CD4-positive, alpha-beta T cell (primary cell): ENCODE measurements at regions of chr12 and their contacts with region 1.

Region 1: DNA sequence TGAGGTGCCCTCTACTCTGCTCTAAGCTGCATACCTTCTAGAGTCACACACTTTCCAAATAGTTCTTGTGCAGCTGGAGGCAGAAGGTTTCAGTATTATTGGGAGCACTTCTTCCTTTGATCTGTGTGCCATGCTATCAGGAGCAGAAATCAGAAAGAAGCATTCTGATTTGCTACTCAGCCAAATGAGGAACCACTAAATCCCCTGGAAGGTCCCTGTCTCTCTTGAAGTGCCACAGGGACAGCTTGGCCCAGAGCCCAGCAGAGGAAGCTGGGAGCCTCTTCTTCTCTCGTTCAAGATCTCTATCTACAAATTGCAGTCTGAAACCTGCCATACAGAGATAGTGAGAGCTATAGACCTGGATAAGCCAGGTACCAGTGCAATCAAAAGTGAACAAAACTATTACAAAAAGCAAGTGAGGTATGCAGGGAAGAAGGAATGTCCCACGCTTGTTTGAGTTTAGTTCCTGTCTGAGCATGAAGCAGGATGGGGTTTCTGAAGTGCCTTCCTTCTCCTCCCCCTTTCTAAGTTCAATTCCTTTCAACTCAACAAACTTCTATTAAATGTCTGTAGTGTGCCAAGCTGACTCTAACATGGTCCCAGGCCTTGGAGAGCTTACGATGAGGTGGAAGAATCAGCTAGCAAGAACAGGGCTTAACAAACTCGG is 100.9 kb upstream of the PARP11 start:
- DNase-seq: peak in 4 of 14 experiments; percentile 22 to 60 (median 54)
- ATAC-seq: peak; percentile 48
- H3K4me3 ChIP-seq: no peak overlapping the region
- H3K4me3 Mint-ChIP-seq: peak overlapping the region; percentile 17
- H3K27ac ChIP-seq: peak overlapping the region; percentile 38 to 60
- H3K27ac Mint-ChIP-seq: peak overlapping the region; percentile 84
- H3K4me1 ChIP-seq: peaks cover 49% of the 10 kb centered on the region
- H3K4me1 Mint-ChIP-seq: peaks cover 66% of the 10 kb centered on the region
- H3K27me3 ChIP-seq: no peaks in the 10 kb centered on the region
- H3K27me3 Mint-ChIP-seq: no peaks in the 10 kb centered on the region
- CTCF ChIP-seq: no peak

Region 2: DNA sequence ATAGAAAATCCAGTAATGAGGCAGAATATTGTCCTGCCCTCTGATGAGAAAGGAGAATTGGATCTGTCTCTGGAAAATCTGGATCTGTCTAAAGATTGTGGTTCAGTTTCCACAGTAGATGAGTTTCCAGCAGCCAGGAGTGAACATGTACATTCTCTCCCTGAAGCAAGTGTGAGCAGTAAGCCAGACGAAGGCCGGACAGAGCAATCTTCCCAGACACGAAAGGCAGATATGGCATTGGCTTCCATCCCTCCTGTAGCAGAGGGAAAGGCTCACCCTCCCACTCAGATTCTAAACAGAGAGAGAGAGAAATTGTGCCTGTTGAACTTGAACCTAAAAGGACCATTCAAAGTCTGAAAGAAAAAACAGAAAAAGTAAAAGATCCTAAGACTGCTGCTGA is 132.3 kb before region 1 on chr12:
- CTCF ChIA-PET with region 1: no interaction called
- POLR2A ChIA-PET with region 1: no interaction called
- intact Hi-C with region 1: no loop called
- DNase-seq: no peak
- ATAC-seq: no peak
- H3K4me3 ChIP-seq: no peak overlapping the region
- H3K4me3 Mint-ChIP-seq: no peak overlapping the region
- H3K27ac ChIP-seq: no peak overlapping the region
- H3K27ac Mint-ChIP-seq: peak overlapping the region; percentile 16
- H3K4me1 ChIP-seq: no peaks in the 10 kb centered on the region
- H3K4me1 Mint-ChIP-seq: peaks cover 62% of the 10 kb centered on the region
- H3K27me3 ChIP-seq: no peaks in the 10 kb centered on the region
- H3K27me3 Mint-ChIP-seq: no peaks in the 10 kb centered on the region
- CTCF ChIP-seq: no peak

Region 3: DNA sequence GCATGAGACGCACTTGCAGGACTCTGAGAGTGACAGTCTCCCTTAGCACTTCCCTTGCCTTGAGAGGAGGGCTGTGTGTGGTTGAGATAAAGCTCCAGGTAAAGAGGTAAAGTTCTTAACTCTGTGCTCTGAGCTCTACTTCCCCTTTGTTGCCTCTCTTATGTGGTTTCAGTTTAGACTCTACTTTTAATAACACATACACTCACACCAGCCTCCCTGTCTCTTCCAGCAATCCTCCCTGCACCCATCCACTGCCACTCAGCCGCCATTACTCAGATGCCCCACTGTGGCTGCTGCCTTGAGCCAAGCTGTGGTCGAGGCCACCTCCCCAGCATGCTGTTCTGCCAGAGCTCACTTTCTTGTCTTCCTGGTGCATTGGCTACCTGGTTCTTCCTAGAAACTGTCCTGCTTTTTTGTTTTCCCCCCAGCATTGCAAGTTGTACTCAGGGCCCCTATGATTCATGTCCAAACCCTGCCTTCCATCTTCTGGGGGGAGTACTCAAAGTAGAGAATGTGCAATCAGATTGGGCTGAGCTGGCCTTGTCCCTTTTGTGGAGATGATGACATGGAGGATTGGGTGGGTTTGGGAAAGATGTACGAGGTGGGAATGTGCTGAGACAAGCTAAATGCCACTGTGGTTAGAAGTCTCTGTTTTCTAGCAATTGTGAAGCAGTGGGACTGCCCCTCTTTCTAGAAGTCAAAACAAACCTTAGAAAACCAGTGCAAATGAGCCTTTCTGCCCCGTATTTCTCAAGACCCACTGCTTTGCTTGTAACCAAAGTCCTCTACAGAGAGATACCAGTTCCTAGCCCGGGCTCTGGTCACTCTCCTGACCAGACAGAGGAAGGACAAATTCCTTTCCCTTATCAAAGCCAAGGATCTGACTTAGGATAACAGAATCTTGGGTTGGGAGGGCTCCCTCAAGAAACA is 14.7 kb after region 1 on chr12:
- CTCF ChIA-PET with region 1: interaction called, 3 read pairs
- POLR2A ChIA-PET with region 1: interaction called, 70 read pairs
- intact Hi-C with region 1: no loop called
- DNase-seq: peak in 8 of 14 experiments; percentile 9 to 63 (median 45)
- ATAC-seq: peak; percentile 94
- H3K4me3 ChIP-seq: peak overlapping the region; percentile 10
- H3K4me3 Mint-ChIP-seq: peak overlapping the region; percentile 52
- H3K27ac ChIP-seq: peak overlapping the region; percentile 43 to 55
- H3K27ac Mint-ChIP-seq: peak overlapping the region; percentile 84
- H3K4me1 ChIP-seq: peaks cover 22% of the 10 kb centered on the region
- H3K4me1 Mint-ChIP-seq: peaks cover 36% of the 10 kb centered on the region
- H3K27me3 ChIP-seq: no peaks in the 10 kb centered on the region
- H3K27me3 Mint-ChIP-seq: no peaks in the 10 kb centered on the region
- CTCF ChIP-seq: no peak